GM10248 (cell line): ENCODE measurements at regions of chr18 and their contacts with region 1.

Region 1: GRCh38 chr18:43571078-43571689 is 293.9 kb upstream of the SYT4 start:
- DNase-seq: no peak
- CTCF ChIP-seq: peak; percentile 69

Region 2: DNA sequence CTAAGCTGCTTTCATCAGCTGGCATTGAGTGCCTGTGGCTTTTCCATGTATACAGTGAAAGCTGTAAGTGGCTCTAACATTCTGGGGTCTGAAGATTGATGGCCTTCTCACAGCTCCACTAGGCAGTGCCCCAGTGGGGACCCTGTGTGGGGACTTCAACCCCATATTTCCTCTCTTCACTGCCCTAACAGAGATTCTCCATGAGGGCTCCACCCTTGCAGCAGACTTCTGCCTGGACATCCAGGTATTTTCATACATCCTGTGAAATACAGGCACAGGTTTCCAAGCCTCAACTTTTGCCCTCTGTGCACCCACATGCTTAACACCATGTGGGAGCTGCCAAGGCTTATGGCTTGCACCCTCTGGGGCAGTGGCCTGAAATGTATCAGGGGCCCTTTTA is 105.7 kb before region 1 on chr18:
- CTCF ChIA-PET with region 1: no interaction called
- POLR2A ChIA-PET with region 1: no interaction called
- DNase-seq: no peak
- CTCF ChIP-seq: no peak

Region 3: DNA sequence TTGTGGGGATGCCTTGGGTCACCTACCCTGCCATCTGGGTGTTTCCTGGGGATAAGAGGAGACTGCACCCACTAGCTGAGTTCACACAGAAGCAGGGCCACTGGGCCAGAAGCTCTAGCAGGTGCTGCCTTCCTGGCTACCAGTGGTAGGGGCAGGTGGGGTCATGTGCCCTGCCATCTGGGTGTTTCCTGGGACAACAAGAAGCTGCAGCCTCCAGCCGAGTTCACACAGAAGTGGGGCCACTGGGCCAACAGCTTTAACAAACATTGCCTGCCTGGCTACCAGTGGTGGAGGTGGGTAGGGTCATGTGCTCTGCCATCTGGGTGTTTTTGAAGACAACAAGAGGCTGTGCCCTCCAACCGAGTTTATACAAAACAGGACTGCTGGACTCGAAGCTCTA is 11.7 kb before region 1 on chr18:
- CTCF ChIA-PET with region 1: interaction called, 22 read pairs
- POLR2A ChIA-PET with region 1: no interaction called
- DNase-seq: no peak
- CTCF ChIP-seq: no peak

Region 4: DNA sequence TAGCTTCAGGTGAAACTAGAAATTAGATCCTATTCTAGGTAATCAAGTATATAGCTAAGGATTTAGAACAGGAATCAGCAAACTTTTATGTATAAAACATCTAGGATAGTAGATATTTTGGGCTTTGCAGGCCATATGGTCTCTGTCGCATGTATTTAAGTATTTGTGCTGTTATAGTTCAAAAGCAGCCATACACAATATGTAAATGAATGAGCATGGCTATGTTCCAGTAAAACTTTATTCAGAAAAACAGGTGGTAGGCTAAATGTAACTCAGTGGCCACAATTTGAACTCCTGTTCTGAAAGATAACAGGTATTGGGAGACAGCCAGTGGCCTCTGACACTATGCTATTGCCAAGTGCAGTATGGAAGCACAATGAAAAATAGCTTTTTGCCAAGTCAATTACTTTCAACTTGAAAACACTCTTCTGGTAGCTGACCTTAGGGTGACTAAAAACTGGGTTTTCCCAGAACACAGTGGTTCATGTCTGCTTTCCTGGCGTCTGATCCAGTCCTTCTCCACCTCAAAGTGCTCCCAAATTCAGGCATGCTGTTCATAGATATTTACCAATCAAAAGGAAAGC is 10.8 kb after region 1 on chr18:
- CTCF ChIA-PET with region 1: interaction called, 122 read pairs
- POLR2A ChIA-PET with region 1: no interaction called
- DNase-seq: no peak
- CTCF ChIP-seq: no peak

Region 5: GRCh38 chr18:43587538-43588153 is 16.5 kb after region 1 on chr18:
- CTCF ChIA-PET with region 1: interaction called, 122 read pairs
- POLR2A ChIA-PET with region 1: no interaction called
- DNase-seq: peak; percentile 31
- CTCF ChIP-seq: peak; percentile 44

Region 6: DNA sequence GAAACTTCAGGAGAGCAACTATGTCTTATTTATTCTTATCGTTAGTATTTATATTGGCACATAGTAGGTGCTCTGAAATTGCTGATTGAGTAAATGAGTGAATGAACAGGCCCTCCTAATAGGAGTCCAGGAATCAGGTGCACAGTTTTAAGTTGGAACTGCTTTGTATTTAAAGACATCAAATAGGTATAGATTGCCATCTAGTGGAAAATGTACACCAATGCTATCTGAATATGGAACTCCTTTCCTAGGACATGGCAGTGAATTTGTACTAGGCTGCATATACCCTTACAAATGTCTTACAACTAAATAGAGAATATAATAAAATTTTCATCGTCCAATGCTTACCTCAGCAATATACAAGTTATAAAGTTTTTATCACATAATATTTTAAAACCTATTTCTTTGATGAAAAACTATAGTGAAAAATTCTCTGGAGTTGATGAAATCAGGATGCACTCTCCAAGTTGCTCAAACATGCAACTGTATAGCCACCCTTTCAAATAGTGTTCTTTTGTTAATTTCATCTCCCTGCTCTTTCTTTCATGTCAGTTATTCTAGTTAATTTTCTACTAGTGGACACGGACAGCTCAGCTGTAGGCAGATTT is 25.0 kb after region 1 on chr18:
- CTCF ChIA-PET with region 1: interaction called, 54 read pairs
- POLR2A ChIA-PET with region 1: no interaction called
- DNase-seq: peak; percentile 40
- CTCF ChIP-seq: peak; percentile 35